ENCODE measurements at regions of chr2 and their contacts with region 1.

Region 1: DNA sequence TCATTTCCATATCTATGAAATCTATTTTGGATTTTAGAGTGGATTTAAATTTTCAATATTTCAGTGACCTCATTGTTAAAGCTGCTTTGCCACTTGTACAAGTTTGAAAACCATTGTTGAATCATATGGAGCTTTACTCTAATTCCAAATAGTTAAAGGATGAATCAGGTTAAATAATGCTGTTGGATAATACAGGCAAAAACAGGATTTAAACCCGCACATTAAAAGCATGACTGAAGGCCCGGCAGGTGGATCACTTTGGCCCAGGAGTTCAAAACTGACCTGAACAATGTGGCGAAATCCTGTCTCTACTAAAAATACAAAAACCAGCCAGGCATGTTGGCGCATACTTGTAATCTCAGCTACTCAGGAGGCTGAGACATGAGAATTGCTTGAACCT is 68.3 kb downstream of the RIF1 start:
- DNase-seq: no peak
- H3K4me3 ChIP-seq: no peak overlapping the region
- H3K27ac ChIP-seq: no peak overlapping the region
- H3K4me1 ChIP-seq: 0 out of 4 replicates have a peak, but pooled peaks cover 0 to 7% of the 10 kb centered on the region in 2 experiments
- H3K27me3 ChIP-seq: no peaks in the 10 kb centered on the region
- CTCF ChIP-seq: no peak
- EP300 ChIP-seq: no peak
- RAD21 ChIP-seq: no peak

Region 2: DNA sequence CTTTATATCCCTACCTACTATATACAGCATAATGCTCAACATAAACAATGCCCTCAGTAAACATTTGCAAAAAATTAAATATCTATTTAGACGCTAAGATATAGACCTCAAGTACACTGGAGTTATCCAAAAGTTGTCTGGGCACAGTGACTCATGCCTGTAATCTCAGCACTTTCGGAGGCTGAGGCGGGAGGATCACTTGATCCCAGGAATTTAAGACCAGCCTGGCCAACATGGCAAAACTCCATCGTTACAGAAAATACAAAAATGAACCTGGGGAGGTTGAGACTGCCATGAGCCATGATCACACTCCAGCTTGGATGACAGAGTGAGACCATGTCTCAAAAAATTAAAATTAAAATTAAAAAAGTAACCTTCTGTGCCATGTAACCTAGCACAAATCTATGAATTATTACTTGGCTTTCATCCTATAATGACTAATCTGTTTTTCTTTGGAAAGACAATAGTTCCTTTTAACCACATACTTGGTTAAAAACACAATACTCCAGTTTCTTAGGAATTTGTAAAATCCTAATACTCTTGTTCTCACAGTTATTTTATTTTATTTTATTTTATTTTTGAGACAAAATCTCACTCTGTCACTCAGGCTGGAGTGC is 127.3 kb before region 1 on chr2:
- CTCF ChIA-PET with region 1: no interaction called
- POLR2A ChIA-PET with region 1: interaction called, 13 read pairs
- DNase-seq: no peak
- H3K4me3 ChIP-seq: no peak overlapping the region
- H3K27ac ChIP-seq: peak overlapping the region in 1 of 2 experiments; percentile 89; a peak in 2 of 4 replicates
- H3K4me1 ChIP-seq: peaks cover 0 to 6% of the 10 kb centered on the region in 2 experiments; a peak in 1 of 4 replicates
- H3K27me3 ChIP-seq: no peaks in the 10 kb centered on the region
- CTCF ChIP-seq: no peak
- EP300 ChIP-seq: 0 out of 4 replicates have a peak, but pooled peaks of 1 of the 2 experiments have one; percentile 14
- RAD21 ChIP-seq: no peak